ENCODE measurements at regions of chr3 and their contacts with region 1.

Region 1: GRCh38 chr3:119819806-119820205 is 37.9 kb downstream of the NR1I2 start:
- DNase-seq: no peak
- H3K4me3 ChIP-seq: no peak overlapping the region
- H3K27ac ChIP-seq: no peak overlapping the region
- H3K4me1 ChIP-seq: no peaks in the 10 kb centered on the region
- H3K27me3 ChIP-seq: no peaks in the 10 kb centered on the region

Region 2: GRCh38 chr3:119809249-119810017 is 10.4 kb before region 1 on chr3:
- CTCF ChIA-PET with region 1: interaction called, 11 read pairs
- POLR2A ChIA-PET with region 1: no interaction called
- DNase-seq: peak in 2 of 3 donors; percentile 18 to 31
- H3K4me3 ChIP-seq: peak overlapping the region; percentile 26 to 83 (median 64)
- H3K27ac ChIP-seq: no peak overlapping the region
- H3K4me1 ChIP-seq: peaks cover 3 to 15% (median 11%) of the 10 kb centered on the region in 4 experiments
- H3K27me3 ChIP-seq: no peaks in the 10 kb centered on the region

Region 3: DNA sequence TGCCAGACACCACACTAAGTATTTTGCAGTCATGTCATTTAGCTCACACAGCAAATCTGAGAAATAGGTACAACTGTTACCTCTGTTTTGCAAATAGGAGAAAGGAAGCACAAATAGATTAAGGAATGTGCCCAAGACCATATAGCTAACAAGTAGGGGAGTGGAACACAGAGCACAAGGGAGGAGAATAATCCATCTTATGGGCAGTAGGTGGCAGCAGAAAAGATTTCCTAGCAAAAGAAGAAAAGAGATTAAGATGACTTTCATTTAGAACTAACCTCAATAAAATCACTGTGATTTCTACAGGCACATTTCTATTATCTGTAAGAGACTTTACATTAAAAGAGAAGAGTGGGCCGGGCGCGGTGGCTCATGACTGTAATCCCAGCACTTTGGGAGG is 11.2 kb after region 1 on chr3:
- CTCF ChIA-PET with region 1: interaction called, 15 read pairs
- POLR2A ChIA-PET with region 1: no interaction called
- DNase-seq: peak in 1 of 3 donors; percentile 16
- H3K4me3 ChIP-seq: no peak overlapping the region
- H3K27ac ChIP-seq: no peak overlapping the region
- H3K4me1 ChIP-seq: peaks cover 2 to 20% (median 9%) of the 10 kb centered on the region in 4 experiments
- H3K27me3 ChIP-seq: no peaks in the 10 kb centered on the region